SK-N-SH (cell line): ENCODE measurements at regions of chr17 and their contacts with region 1.

Region 1: GRCh38 chr17:66200685-66201092 is 8.8 kb upstream of the CEP112 start:
- DNase-seq: peak; percentile 75
- H3K4me3 ChIP-seq: no peak overlapping the region
- H3K27ac ChIP-seq: no peak overlapping the region
- H3K4me1 ChIP-seq: peaks cover 0 to 2% of the 10 kb centered on the region in 2 experiments; a peak in 1 of 4 replicates
- H3K27me3 ChIP-seq: no peaks in the 10 kb centered on the region
- CTCF ChIP-seq: peak; percentile 98
- EP300 ChIP-seq: no peak
- RAD21 ChIP-seq: peak; percentile 100

Region 2: DNA sequence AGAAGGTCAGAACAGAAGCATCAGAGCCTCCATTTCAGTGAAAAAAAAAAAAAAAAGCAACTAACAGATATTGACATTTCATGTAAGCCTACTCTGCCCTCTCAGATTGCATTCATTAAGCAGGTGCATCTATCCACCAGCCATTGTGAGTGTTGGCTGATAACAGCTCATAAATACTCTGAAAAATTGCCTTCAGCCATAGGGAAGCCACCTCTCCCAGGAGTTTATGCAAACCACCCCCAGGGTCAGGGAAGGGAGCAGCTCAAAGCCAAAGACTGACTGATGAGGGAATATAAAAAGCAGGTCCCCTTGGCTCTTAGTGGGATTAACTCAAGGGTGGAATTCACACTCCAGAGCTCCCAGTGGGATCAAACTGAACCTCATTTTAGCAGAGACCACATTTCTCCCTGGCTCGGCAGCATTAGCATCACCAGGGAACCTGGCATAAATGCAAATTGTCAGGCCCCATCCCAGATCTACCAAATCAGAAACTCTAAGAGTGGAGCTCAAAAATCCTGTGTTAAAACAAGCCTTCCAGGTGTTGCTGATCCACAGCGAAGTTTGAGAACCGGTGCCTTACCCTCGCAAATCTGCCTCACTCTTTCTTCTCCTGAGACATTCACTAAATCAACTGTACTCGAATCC is 14.3 kb after region 1 on chr17:
- CTCF ChIA-PET with region 1: interaction called, 35 read pairs
- POLR2A ChIA-PET with region 1: no interaction called
- DNase-seq: no peak
- H3K4me3 ChIP-seq: no peak overlapping the region
- H3K27ac ChIP-seq: no peak overlapping the region
- H3K4me1 ChIP-seq: no peaks in the 10 kb centered on the region
- H3K27me3 ChIP-seq: peaks cover 2% of the 10 kb centered on the region; the same call in 1 of the 2 replicates
- CTCF ChIP-seq: no peak
- EP300 ChIP-seq: no peak
- RAD21 ChIP-seq: no peak

Region 3: GRCh38 chr17:66625311-66625775 is 424.7 kb after region 1 on chr17:
- CTCF ChIA-PET with region 1: interaction called, 24 read pairs
- POLR2A ChIA-PET with region 1: no interaction called
- DNase-seq: peak; percentile 63
- H3K4me3 ChIP-seq: no peak overlapping the region
- H3K27ac ChIP-seq: peak overlapping the region in 1 of 2 experiments; percentile 1; a peak in 2 of 4 replicates
- H3K4me1 ChIP-seq: peaks cover under 1 to 31% of the 10 kb centered on the region in 2 experiments; a peak in 3 of 4 replicates
- H3K27me3 ChIP-seq: no peaks in the 10 kb centered on the region
- CTCF ChIP-seq: peak; percentile 78
- EP300 ChIP-seq: peak in 1 of 2 experiments; percentile 55; a peak in 1 of 4 replicates
- RAD21 ChIP-seq: peak; percentile 95

Region 4: GRCh38 chr17:66661381-66661843 is 460.7 kb after region 1 on chr17:
- CTCF ChIA-PET with region 1: interaction called, 13 read pairs
- POLR2A ChIA-PET with region 1: no interaction called
- DNase-seq: no peak
- H3K4me3 ChIP-seq: no peak overlapping the region
- H3K27ac ChIP-seq: peak overlapping the region in 1 of 2 experiments; percentile 88; a peak in 2 of 4 replicates
- H3K4me1 ChIP-seq: peaks cover 9 to 37% of the 10 kb centered on the region in 2 experiments; a peak in 3 of 4 replicates
- H3K27me3 ChIP-seq: no peaks in the 10 kb centered on the region
- CTCF ChIP-seq: no peak
- EP300 ChIP-seq: peak in 1 of 2 experiments; percentile 16; a peak in 1 of 4 replicates
- RAD21 ChIP-seq: no peak

Region 5: DNA sequence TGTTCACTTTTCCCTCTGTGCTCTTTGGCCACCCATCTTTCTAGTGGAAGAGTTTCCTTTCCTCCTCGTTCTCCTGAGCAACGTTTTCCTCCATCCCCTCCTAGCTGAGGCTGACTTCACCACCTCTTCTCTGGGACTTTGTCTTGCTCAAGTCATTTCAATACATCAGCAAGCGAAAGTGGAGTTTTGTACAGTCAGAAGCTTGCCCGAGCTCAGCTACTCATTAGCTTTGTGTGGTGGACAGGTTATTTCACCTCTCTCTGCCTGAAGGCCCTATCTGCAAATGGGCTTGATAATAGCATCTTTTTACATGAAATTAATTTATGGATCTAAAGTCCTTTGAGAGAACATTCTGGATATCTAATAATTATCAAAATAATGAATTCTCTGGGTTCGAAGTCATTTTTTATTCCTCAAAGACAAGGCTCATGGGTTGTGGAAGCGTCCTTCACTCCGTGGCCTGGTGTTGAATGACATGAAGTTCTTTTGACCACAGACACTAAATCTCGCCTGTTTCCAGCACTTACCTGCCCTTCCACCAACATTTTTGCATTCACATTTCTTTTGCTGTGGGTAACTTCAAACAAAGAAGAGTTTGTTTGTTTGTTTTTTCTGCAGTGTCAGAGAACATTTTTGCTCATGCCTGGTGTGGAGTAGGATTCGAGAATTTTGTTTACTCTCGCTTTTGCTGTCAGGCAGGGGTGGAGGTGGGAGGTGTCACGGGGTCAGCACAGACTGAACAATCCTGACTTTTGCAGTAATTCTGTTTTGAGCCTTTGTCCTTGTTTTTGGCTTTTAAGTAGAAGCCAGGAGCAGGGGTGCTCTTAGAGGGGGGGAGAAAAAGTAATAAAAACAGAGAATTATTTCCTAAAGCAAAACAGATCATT is 479.2 kb after region 1 on chr17:
- CTCF ChIA-PET with region 1: interaction called, 71 read pairs
- POLR2A ChIA-PET with region 1: no interaction called
- DNase-seq: no peak
- H3K4me3 ChIP-seq: no peak overlapping the region
- H3K27ac ChIP-seq: no peak overlapping the region
- H3K4me1 ChIP-seq: peaks cover 0 to 12% of the 10 kb centered on the region in 2 experiments; a peak in 2 of 4 replicates
- H3K27me3 ChIP-seq: no peaks in the 10 kb centered on the region
- CTCF ChIP-seq: no peak
- EP300 ChIP-seq: no peak
- RAD21 ChIP-seq: no peak

Region 6: DNA sequence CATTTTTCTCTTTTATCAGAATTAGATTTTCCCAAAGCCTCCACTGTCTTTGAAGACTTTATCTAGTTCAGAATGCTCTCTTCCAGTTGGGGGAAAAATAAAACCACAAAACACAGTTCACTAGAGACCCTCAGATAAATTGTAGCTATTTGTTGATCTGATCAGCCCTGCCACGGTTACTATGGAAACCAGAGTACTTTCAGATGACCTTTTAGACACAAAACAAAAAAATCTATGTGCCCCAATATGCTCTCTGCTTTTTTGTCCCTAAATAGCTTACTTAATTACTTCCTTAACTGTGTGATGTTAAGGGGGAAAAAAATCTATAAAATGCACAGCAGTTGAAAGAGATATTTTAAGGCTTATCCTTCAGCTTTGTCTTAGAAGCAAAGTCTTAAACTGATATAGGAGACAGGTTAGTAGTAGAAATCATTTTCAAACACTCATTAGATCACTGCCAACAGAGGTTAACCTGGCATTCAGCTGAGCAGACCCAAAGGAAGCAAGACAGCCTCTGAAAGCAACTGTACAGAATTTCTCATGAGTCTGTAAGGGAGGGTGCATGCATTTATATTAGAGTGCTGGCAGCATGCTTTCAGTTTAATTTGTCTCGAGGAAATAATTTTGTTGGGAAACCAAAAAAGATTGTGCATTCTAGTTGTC is 504.3 kb after region 1 on chr17:
- CTCF ChIA-PET with region 1: interaction called, 10 read pairs
- POLR2A ChIA-PET with region 1: no interaction called
- DNase-seq: no peak
- H3K4me3 ChIP-seq: no peak overlapping the region
- H3K27ac ChIP-seq: peak overlapping the region in 1 of 2 experiments; percentile 68; a peak in 2 of 4 replicates
- H3K4me1 ChIP-seq: peaks cover 0 to 20% of the 10 kb centered on the region in 2 experiments; a peak in 2 of 4 replicates
- H3K27me3 ChIP-seq: no peaks in the 10 kb centered on the region
- CTCF ChIP-seq: no peak
- EP300 ChIP-seq: no peak
- RAD21 ChIP-seq: no peak